Stomach (tissue), 19 donors: ENCODE measurements at regions of chr19 and their contacts with region 1.

Region 1: GRCh38 chr19:47305309-47305751 is 4.3 kb upstream of the C5AR1 start:
- DNase-seq: peak; percentile 73 to 77
- H3K4me3 ChIP-seq: no peak overlapping the region
- H3K27ac ChIP-seq: no peak overlapping the region
- H3K4me1 ChIP-seq: peaks cover 0 to 12% (median 7%) of the 10 kb centered on the region in 4 donors
- H3K27me3 ChIP-seq: peaks cover 0 to 10% (median 0%) of the 10 kb centered on the region in 3 donors
- CTCF ChIP-seq: peak in 5 of 7 experiments; percentile 58 to 93 (median 89)
- EP300 ChIP-seq: no peak
- POLR2A ChIP-seq: no peak

Region 2: DNA sequence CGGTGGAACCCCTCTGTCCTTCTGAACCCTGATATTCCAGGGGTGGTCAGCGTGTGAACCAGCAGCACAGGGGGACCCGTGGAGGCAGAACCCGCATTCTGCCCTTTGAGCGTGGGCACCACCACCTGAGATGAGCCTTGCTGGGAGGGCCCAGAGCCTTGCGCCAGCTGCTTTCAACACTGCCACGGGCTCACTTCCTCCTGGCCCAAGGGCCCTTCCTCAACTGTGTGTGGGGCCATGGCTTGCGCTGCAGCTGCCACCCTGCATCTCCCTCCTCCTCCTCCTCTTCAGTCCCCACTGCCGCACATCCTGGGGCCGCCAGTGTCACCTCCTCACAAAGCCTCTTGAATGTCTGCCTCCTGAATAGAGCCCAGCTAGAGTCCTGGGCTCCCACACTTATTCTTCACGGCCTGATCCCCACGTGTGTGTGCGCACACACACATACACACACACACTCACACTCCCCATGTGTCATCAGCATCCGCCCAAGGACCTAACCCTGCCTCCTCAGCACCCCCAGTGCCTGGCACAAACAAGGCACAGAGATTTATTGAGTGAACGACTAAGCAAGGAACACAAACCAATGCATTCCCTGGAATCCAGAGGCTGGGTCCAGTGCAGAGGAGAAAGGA is 230.0 kb before region 1 on chr19:
- intact Hi-C with region 1: no loop called
- DNase-seq: no peak
- H3K4me3 ChIP-seq: no peak overlapping the region
- H3K27ac ChIP-seq: no peak overlapping the region
- H3K4me1 ChIP-seq: peaks cover 4 to 29% (median 11%) of the 10 kb centered on the region in 4 donors
- H3K27me3 ChIP-seq: no peaks in the 10 kb centered on the region
- CTCF ChIP-seq: no peak
- EP300 ChIP-seq: no peak
- POLR2A ChIP-seq: no peak

Region 3: DNA sequence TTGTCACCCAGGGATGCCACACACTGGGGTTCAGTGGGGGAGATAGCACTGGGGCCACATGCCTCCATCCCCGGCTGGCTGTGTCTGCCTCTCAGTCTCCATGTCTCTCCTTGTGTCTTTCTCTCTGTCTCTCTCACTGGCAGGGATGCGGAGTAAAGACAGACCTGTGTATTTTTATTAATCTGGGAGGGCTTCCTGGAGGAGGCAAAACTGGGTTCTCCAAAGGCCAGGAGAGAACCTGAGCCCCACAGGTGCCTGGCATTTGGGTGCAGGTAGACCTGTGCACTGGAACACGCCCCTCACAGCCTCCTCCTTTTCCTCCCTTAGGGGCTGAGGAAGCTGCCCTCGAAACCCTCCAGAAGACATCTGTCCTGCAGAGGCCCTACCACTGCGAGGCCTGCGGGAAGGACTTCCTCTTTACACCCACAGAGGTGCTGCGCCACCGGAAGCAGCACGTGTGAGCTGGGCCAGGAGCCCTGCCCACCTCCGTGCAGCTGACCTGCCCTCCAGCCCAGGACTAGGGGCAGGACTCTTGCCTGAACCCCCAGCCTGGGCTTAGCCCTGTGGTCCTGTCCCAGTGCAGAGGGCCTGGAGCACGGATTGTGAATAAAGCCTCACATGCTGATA is 76.4 kb after region 1 on chr19:
- intact Hi-C with region 1: loop called (anchors 10 kb)
- DNase-seq: peak in 1 of 2 donors; percentile 30
- H3K4me3 ChIP-seq: no peak overlapping the region
- H3K27ac ChIP-seq: peak overlapping the region in 1 of 5 donors; percentile 24
- H3K4me1 ChIP-seq: peaks cover 0 to 19% (median 2%) of the 10 kb centered on the region in 4 donors
- H3K27me3 ChIP-seq: no peaks in the 10 kb centered on the region
- CTCF ChIP-seq: no peak
- EP300 ChIP-seq: no peak
- POLR2A ChIP-seq: no peak